Activated CD4-positive, alpha-beta memory T cell treated with anti-CD3 and anti-CD28 coated beads for 36 hours (primary cell): ENCODE measurements at regions of chr5 and their contacts with region 1.

Region 1: GRCh38 chr5:82676661-82677060 is 398.5 kb upstream of the RPS23 start:
- DNase-seq: peak; percentile 20
- H3K4me3 Mint-ChIP-seq: peak overlapping the region; percentile 42
- H3K27ac Mint-ChIP-seq: peak overlapping the region; percentile 67
- H3K4me1 Mint-ChIP-seq: peaks cover 23% of the 10 kb centered on the region
- H3K27me3 Mint-ChIP-seq: peaks cover 4% of the 10 kb centered on the region

Region 2: DNA sequence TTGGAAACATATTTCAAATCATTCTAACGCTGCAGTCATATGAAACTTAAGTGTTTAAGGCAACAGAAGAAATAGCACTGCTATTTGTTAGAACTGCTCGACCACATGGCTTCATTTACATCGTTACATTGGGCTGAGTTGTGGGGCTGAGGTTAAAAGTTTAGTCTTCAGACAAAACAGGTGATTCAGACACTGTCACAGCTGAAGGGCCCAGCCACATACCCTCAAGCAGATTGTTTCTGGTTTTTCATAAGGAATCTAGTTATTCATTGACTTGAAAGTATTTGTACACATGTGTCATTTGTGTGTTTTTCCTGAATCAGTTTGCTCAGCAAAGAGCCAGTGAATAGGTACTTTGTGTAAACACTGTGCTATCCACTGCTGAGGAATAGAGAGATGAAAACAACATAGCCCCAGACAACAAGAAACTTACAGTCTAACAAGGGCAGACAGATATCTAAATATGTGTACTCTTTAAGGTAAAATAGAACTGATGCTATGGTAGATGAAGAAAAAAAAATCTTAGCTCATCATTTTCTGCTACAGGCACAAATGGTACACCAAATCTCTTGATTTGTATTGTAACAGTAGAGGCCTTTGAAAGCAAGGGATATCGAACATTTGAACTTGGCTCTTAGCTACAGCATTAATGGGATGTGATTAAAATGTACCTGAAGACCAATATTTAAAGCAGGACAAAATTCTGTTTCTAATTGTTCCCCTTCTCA is 40.9 kb before region 1 on chr5:
- CTCF ChIA-PET with region 1: no interaction called
- POLR2A ChIA-PET with region 1: no interaction called
- intact Hi-C with region 1: loop called (anchors 1 kb)
- DNase-seq: peak; percentile 30
- H3K4me3 Mint-ChIP-seq: no peak overlapping the region
- H3K27ac Mint-ChIP-seq: no peak overlapping the region
- H3K4me1 Mint-ChIP-seq: peaks cover 4% of the 10 kb centered on the region
- H3K27me3 Mint-ChIP-seq: no peaks in the 10 kb centered on the region